H1 (cell line): ENCODE measurements at regions of chr15 and their contacts with region 1.

Region 1: DNA sequence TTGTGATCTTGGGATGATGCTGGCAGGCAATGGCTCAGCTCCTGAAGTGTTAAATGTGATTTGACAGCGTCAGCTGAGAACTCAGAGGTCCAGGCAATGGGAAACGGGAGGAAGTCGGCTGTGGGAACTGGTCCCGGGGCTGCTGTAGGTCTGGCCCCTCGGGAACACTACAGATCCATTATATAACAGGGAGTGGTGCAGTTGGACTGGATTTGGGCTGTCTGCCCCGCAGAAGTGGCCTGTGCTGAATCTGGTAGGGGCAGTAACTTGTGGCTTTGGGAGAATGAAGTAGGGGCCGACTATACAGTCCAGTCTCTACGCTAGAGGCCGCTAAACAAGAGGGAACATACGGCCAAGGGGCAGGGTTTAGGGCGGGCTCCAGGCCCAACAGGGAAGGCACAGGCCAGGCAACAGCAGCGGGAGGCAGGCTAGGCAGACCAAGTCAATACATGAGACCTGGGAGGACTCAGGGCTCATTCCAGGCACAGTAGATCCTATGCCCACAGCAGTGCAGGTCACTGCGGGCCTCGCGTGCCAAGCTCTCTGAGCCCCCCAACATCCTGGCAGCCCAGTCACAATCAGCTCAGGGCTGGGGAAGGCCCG is 20.3 kb upstream of the IL16 start:
- DNase-seq: no peak
- H3K4me3 ChIP-seq: no peak overlapping the region
- H3K27ac ChIP-seq: no peak overlapping the region
- H3K4me1 ChIP-seq: peaks cover 0 to 7% (median 0%) of the 10 kb centered on the region in 4 experiments; a peak in 1 of 7 replicates
- H3K27me3 ChIP-seq: no peaks in the 10 kb centered on the region
- CTCF ChIP-seq: peak in 1 of 3 experiments; percentile 25; a peak in 1 of 4 replicates
- EP300 ChIP-seq: no peak
- POLR2A ChIP-seq: no peak
- RAD21 ChIP-seq: peak in 1 of 2 experiments; percentile 10; a peak in 1 of 4 replicates

Region 2: DNA sequence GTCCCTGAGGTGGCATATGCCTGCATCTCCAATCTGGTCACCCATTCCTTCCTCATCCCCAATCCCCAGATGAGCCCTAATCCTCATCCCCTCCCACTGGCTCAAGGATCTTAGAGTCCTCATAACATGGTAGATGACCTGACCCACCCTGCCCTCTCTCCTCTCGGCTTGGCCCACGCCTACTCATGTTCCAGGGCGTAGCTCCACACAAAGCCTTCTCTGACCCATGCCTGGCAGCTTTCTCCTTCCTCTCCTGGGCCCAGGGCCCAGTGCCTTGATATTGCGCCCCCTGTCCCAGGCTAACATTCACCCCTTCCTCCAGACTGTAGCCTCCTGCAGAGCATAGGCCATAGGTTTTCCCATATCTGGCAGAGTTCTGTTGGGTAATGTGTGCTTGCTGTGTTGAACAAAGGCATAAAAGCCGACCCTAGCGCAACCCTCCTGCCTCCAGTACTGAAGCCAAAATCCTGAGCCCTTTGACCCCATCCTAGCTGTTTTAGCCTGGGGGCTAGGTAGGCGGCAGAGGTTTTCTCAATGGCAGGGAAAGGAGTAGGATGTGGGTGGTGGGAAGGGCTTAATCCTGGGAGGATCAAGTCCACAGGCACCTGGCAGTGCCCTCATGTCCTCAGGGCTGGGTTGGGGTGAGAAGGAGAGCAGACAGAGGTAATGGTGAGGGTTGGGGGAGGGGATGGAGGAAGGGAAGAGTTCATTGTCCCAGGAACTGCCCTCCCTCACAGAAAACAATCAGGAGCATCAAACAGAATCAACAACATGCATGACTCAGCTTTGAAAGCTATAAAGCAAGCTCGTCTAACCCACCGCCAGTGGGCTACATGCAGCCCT is 222.2 kb before region 1 on chr15:
- CTCF ChIA-PET with region 1: no interaction called
- POLR2A ChIA-PET with region 1: no interaction called
- DNase-seq: peak in 1 of 2 experiments; percentile 51
- H3K4me3 ChIP-seq: no peak overlapping the region; a peak in 1 of 8 replicates
- H3K27ac ChIP-seq: no peak overlapping the region; the same call in 1 of the 2 replicates
- H3K4me1 ChIP-seq: peaks cover 0 to 16% (median 6%) of the 10 kb centered on the region in 4 experiments; a peak in 5 of 7 replicates
- H3K27me3 ChIP-seq: no peaks in the 10 kb centered on the region
- CTCF ChIP-seq: no peak
- EP300 ChIP-seq: no peak
- POLR2A ChIP-seq: no peak
- RAD21 ChIP-seq: no peak

Region 3: GRCh38 chr15:81163961-81164800 is 12.2 kb before region 1 on chr15:
- CTCF ChIA-PET with region 1: interaction called, 11 read pairs
- POLR2A ChIA-PET with region 1: no interaction called
- DNase-seq: no peak
- H3K4me3 ChIP-seq: no peak overlapping the region
- H3K27ac ChIP-seq: no peak overlapping the region
- H3K4me1 ChIP-seq: no peaks in the 10 kb centered on the region
- H3K27me3 ChIP-seq: no peaks in the 10 kb centered on the region
- CTCF ChIP-seq: peak; percentile 19 to 25 (median 25); a peak in 2 of 4 replicates
- EP300 ChIP-seq: no peak
- POLR2A ChIP-seq: no peak
- RAD21 ChIP-seq: peak; percentile 27 to 42; a peak in 3 of 4 replicates

Region 4: DNA sequence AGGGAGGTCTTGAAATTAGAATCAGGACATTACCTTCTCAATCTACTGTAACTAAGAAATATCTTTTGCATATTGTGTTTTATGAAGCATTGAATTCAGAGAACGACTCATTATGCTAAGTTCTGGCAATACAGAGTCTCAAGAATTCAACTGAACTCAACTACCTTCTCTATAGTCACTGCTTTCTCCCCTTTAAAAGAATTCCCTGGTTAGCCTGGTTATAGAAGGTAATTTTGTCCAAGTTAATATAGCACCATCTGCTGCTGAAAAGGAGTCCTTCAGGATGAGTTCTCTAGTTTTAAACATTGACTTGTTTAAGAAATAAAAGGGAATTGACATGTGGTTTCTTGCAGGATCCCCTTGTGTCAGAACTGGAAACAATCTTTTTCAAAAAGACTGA is 80.5 kb after region 1 on chr15:
- CTCF ChIA-PET with region 1: interaction called, 12 read pairs
- POLR2A ChIA-PET with region 1: no interaction called
- DNase-seq: no peak
- H3K4me3 ChIP-seq: no peak overlapping the region
- H3K27ac ChIP-seq: no peak overlapping the region
- H3K4me1 ChIP-seq: no peaks in the 10 kb centered on the region
- H3K27me3 ChIP-seq: no peaks in the 10 kb centered on the region
- CTCF ChIP-seq: peak in 2 of 3 experiments; percentile 37 to 43; a peak in 2 of 4 replicates
- EP300 ChIP-seq: no peak
- POLR2A ChIP-seq: no peak
- RAD21 ChIP-seq: peak; percentile 55